ENCODE measurements at regions of chr11 and their contacts with region 1.

Region 1: GRCh38 chr11:19742588-19743292 is 30.1 kb downstream of the NAV2 start:
- DNase-seq: peak; percentile 22
- ATAC-seq: peak; percentile 58
- H3K4me3 Mint-ChIP-seq: no peak overlapping the region
- H3K27ac Mint-ChIP-seq: no peak overlapping the region
- H3K4me1 Mint-ChIP-seq: no peaks in the 10 kb centered on the region
- H3K27me3 Mint-ChIP-seq: peaks cover 2% of the 10 kb centered on the region
- CTCF ChIP-seq: no peak

Region 2: GRCh38 chr11:19071255-19071654 is 671.5 kb before region 1 on chr11:
- CTCF ChIA-PET with region 1: no interaction called
- POLR2A ChIA-PET with region 1: no interaction called
- intact Hi-C with region 1: loop called (anchors 1 kb)
- DNase-seq: no peak
- ATAC-seq: peak; percentile 70
- H3K4me3 Mint-ChIP-seq: no peak overlapping the region
- H3K27ac Mint-ChIP-seq: no peak overlapping the region
- H3K4me1 Mint-ChIP-seq: peaks cover 2% of the 10 kb centered on the region
- H3K27me3 Mint-ChIP-seq: peaks cover 29% of the 10 kb centered on the region
- CTCF ChIP-seq: no peak

Region 3: GRCh38 chr11:19259487-19260345 is 483.0 kb before region 1 on chr11:
- CTCF ChIA-PET with region 1: no interaction called
- POLR2A ChIA-PET with region 1: no interaction called
- intact Hi-C with region 1: loop called (anchors 1 kb)
- DNase-seq: peak; percentile 45
- ATAC-seq: peak; percentile 87
- H3K4me3 Mint-ChIP-seq: no peak overlapping the region
- H3K27ac Mint-ChIP-seq: no peak overlapping the region
- H3K4me1 Mint-ChIP-seq: peaks cover 4% of the 10 kb centered on the region
- H3K27me3 Mint-ChIP-seq: no peaks in the 10 kb centered on the region
- CTCF ChIP-seq: peak; percentile 79

Region 4: GRCh38 chr11:19370100-19370861 is 372.5 kb before region 1 on chr11:
- CTCF ChIA-PET with region 1: no interaction called
- POLR2A ChIA-PET with region 1: no interaction called
- intact Hi-C with region 1: no loop called
- DNase-seq: no peak
- ATAC-seq: no peak
- H3K4me3 Mint-ChIP-seq: no peak overlapping the region
- H3K27ac Mint-ChIP-seq: no peak overlapping the region
- H3K4me1 Mint-ChIP-seq: no peaks in the 10 kb centered on the region
- H3K27me3 Mint-ChIP-seq: peaks cover 9% of the 10 kb centered on the region
- CTCF ChIP-seq: no peak

Region 5: DNA sequence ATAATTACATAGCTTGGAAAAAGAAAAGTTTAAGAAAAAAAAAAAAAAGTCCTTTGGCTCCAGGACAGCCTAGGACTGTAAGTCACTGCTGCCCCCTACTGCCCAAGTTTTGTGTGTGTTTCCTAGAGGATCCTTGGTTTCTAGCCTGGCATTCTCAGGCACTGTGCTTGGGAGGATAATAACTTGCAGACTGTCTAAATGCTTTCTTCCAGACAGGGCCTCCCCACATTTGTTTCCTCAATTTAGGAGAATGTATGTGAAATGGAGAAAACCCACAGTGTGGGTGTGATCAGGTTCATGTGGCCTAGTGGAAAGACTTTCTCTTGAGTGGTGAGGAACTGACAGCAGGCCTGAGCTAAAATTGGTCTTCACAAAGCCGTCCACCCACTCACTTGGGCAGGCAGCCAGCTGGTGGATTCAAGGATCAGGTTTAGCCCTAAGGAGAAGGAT is 160.9 kb after region 1 on chr11:
- CTCF ChIA-PET with region 1: interaction called, 4 read pairs
- POLR2A ChIA-PET with region 1: no interaction called
- intact Hi-C with region 1: loop called (anchors 1 kb)
- DNase-seq: no peak
- ATAC-seq: no peak
- H3K4me3 Mint-ChIP-seq: no peak overlapping the region
- H3K27ac Mint-ChIP-seq: no peak overlapping the region
- H3K4me1 Mint-ChIP-seq: no peaks in the 10 kb centered on the region
- H3K27me3 Mint-ChIP-seq: peaks cover 2% of the 10 kb centered on the region
- CTCF ChIP-seq: no peak